Ascending aorta (tissue), 2 donors: ENCODE measurements at regions of chr7 and their contacts with region 1.

Region 1: GRCh38 chr7:100428967-100429636 is 529 bp upstream of the MEPCE start:
- DNase-seq: peak; percentile 100
- H3K4me3 ChIP-seq: peak overlapping the region; percentile 74 to 82
- H3K27ac ChIP-seq: peak overlapping the region; percentile 99 to 100
- H3K4me1 ChIP-seq: peaks cover 4 to 22% of the 10 kb centered on the region in 2 donors
- H3K27me3 ChIP-seq: no peaks in the 10 kb centered on the region
- CTCF ChIP-seq: peak in 2 of 3 experiments; percentile 7 to 49

Region 2: GRCh38 chr7:99472561-99473243 is 956.4 kb before region 1 on chr7 and contains the start of gene ZNF789:
- intact Hi-C with region 1: no loop called
- DNase-seq: peak; percentile 94 to 99
- H3K4me3 ChIP-seq: peak within 1 kb of the TSS; percentile 61 to 95
- H3K27ac ChIP-seq: peak within 1 kb of the TSS; percentile 83 to 86
- H3K4me1 ChIP-seq: peaks cover 0 to 14% of the 10 kb centered on the region in 2 donors
- H3K27me3 ChIP-seq: no peaks in the 10 kb centered on the region
- CTCF ChIP-seq: no peak
- total RNA-seq, gene ZNF789: 4.2 TPM

Region 3: DNA sequence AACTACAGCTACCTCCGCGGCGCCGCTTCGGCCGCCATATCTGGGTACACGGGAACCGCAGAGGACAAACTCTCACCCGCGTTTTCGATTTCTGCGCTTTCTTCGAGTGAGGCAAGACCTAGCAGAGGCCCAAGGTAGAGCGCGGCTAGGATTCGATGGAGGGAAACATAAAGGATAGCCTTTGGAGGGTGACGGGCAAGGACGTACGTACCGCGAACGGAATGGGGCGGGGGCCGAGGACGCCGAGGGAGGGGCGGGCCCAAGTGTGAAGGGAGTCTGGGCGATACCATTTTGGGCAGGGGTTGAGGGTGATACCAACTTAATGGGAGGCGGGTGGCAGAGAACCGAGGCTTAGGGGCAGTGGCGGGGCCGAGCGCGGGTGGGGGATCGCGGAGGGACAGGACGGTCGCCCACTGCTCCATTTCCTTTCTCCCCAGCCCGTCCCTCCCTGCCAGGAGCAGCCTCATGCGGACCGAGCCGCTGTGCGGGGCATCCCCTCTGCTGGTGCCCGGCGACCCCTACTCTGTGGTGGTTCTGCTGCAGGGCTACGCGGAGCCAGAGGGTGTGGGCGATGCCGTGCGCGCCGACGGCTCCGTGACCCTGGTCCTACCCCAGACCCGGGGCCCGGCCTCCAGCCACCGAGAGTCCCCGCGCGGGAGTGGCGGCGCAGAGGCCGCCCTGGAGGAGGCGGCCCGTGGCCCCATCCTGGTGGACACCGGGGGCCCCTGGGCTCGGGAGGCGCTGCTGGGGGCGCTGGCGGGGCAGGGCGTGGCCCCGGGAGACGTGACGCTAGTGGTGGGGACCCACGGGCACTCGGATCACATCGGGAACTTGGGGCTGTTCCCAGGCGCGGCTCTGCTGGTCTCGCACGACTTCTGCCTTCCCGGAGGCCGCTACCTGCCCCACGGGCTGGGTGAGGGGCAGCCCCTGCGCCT is 301.9 kb before region 1 on chr7 and contains the start of gene MBLAC1:
- intact Hi-C with region 1: loop called (anchors 10 kb)
- DNase-seq: peak; percentile 26 to 91
- H3K4me3 ChIP-seq: peak within 1 kb of the TSS; percentile 79 to 99
- H3K27ac ChIP-seq: peak within 1 kb of the TSS; percentile 87 to 98
- H3K4me1 ChIP-seq: peaks cover 0 to 14% of the 10 kb centered on the region in 2 donors
- H3K27me3 ChIP-seq: no peaks in the 10 kb centered on the region
- CTCF ChIP-seq: no peak
- total RNA-seq, gene MBLAC1: not detected

Region 4: GRCh38 chr7:100465702-100466311 is 36.7 kb after region 1 on chr7:
- intact Hi-C with region 1: no loop called
- DNase-seq: peak in 1 of 2 donors; percentile 88
- H3K4me3 ChIP-seq: peak overlapping the region in 1 of 2 donors; percentile 38
- H3K27ac ChIP-seq: peak overlapping the region; percentile 55 to 67
- H3K4me1 ChIP-seq: peaks cover 13 to 14% of the 10 kb centered on the region in 2 donors
- H3K27me3 ChIP-seq: no peaks in the 10 kb centered on the region
- CTCF ChIP-seq: peak; percentile 58 to 89 (median 86)

Region 5: GRCh38 chr7:100478966-100479665 is 50.0 kb after region 1 on chr7 and contains the start of gene TSC22D4:
- intact Hi-C with region 1: loop called (anchors 2 kb)
- DNase-seq: peak; percentile 77 to 95
- H3K4me3 ChIP-seq: peak within 1 kb of the TSS; percentile 90 to 92
- H3K27ac ChIP-seq: peak within 1 kb of the TSS; percentile 85 to 87
- H3K4me1 ChIP-seq: peaks cover 25 to 39% of the 10 kb centered on the region in 2 donors
- H3K27me3 ChIP-seq: no peaks in the 10 kb centered on the region
- CTCF ChIP-seq: no peak
- total RNA-seq, gene TSC22D4: 68.2 TPM

Region 6: DNA sequence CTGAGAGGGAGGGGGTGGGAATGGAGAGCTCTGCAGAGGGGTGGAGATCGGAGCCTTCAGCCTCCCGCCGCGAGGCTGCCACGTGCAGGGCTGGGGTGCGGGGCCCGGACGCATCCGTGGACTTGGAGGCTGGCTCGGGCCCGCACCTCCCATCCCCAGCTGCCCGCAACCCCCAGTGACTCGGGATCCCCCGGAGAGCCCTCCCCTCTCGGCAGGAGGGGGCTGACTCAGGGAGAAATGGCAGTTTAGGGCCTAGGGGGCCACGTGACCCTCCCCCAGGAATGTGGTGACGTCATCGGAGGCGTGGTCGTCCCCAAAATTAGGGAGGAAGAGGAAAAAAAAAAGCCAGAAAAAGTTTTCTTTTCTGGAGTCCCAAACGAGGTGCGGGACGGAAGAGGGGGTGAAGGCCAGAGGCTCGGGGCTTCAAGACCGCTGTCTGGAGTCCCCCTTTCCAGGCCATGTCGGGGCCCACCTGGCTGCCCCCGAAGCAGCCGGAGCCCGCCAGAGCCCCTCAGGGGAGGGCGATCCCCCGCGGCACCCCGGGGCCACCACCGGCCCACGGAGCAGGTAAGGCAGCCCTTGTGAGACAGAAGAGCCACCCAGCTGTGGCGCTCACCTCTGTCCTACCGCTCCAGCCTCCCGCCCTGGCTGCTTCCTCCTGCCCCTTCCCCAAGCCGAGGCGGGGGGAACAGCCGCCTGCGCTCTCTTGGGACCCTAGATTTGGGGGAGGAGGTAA is 438.1 kb after region 1 on chr7 and contains the start of gene TRIP6:
- intact Hi-C with region 1: loop called (anchors 5 kb)
- DNase-seq: peak; percentile 71 to 96
- H3K4me3 ChIP-seq: peak within 1 kb of the TSS; percentile 94 to 95
- H3K27ac ChIP-seq: peak within 1 kb of the TSS; percentile 99
- H3K4me1 ChIP-seq: peaks cover 17 to 23% of the 10 kb centered on the region in 2 donors
- H3K27me3 ChIP-seq: no peaks in the 10 kb centered on the region
- CTCF ChIP-seq: no peak
- total RNA-seq, gene TRIP6: 221 TPM

Region 7: DNA sequence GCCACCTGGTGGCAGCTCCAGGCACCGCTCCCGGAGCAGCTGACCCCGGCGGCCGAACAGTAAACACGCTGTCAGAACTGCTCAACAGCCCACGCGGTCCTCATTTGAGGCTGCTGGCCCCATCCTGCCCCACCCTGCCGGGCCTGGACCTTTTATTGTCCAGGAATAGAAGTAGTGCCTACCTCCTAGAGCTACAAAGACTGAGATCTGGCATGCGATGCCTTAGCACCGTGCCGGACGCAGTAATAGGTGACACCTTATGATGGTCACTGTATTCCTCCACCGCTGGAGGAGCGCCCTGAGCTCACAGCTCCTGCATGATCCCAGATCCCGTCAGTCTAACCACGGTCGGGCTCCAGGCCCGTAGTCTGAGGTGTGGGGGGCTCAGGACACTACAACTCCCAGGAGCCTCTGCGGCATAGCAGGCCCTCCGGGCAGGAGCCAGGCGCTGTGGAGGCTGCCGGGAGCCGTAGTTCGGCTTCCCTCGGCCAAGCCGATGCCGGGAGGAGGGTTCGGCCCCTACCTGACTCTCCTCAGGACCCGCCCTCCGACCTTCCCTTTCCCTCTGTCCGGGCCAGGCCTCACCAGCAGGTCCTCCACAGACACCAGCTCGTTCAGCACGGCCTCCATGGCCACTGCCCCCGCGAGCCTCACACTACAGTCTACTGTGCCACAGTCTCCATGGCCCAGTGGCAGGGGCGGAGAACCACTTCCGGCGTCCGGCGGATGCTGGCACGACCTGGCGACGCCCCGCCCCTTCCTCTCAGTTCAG is 815.5 kb after region 1 on chr7 and contains the start of gene FIS1:
- intact Hi-C with region 1: loop called (anchors 10 kb)
- DNase-seq: peak; percentile 76 to 95
- H3K4me3 ChIP-seq: peak within 1 kb of the TSS; percentile 77 to 94
- H3K27ac ChIP-seq: peak within 1 kb of the TSS; percentile 95 to 97
- H3K4me1 ChIP-seq: peaks cover 0 to 14% of the 10 kb centered on the region in 2 donors
- H3K27me3 ChIP-seq: no peaks in the 10 kb centered on the region
- CTCF ChIP-seq: peak; percentile 92 to 95 (median 95)
- total RNA-seq, gene FIS1: 266 TPM